ENCODE measurements at regions of chr4 and their contacts with region 1.

Region 1: GRCh38 chr4:122783301-122784215 is 43.1 kb upstream of the FGF2 start:
- DNase-seq: peak; percentile 66
- H3K4me3 ChIP-seq: peak overlapping the region; percentile 27
- H3K27ac ChIP-seq: peak overlapping the region; percentile 87
- H3K4me1 ChIP-seq: peaks cover 30% of the 10 kb centered on the region
- H3K27me3 ChIP-seq: no peaks in the 10 kb centered on the region
- CTCF ChIP-seq: no peak

Region 2: GRCh38 chr4:122700178-122700725 is 83.3 kb before region 1 on chr4:
- intact Hi-C with region 1: no loop called
- DNase-seq: peak; percentile 77
- H3K4me3 ChIP-seq: peak overlapping the region; percentile 65
- H3K27ac ChIP-seq: peak overlapping the region; percentile 88
- H3K4me1 ChIP-seq: peaks cover 26% of the 10 kb centered on the region
- H3K27me3 ChIP-seq: no peaks in the 10 kb centered on the region
- CTCF ChIP-seq: no peak

Region 3: DNA sequence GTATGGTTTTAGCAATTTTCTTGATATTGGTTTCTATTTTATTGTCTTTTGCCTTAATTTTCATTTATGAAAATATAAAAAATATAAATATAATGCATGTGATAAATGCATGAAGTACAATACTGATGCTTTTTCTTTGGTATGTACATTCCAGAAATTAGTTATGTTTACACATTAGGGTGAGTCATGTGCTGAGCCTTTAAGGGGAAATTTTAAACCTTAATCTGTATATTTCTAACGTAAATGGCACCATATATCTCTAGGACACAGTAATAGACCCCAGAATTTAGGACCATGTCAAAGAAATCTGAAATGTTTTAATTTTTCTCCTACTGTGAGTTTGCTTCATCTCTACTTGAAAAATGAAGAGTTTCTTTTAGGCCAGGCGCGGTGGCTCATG is 495.2 kb after region 1 on chr4:
- intact Hi-C with region 1: loop called (anchors 10 kb)
- DNase-seq: no peak
- H3K4me3 ChIP-seq: no peak overlapping the region
- H3K27ac ChIP-seq: no peak overlapping the region
- H3K4me1 ChIP-seq: peaks cover 2% of the 10 kb centered on the region
- H3K27me3 ChIP-seq: no peaks in the 10 kb centered on the region
- CTCF ChIP-seq: no peak